PC-3 (cell line): ENCODE measurements at regions of chr1 and their contacts with region 1.

Region 1: GRCh38 chr1:235971571-235972310 is 93.1 kb downstream of the NID1 start:
- DNase-seq: peak; percentile 87
- ATAC-seq: peak; percentile 87
- H3K4me3 ChIP-seq: peak overlapping the region; percentile 15; the same call in 1 of the 2 replicates
- H3K27ac ChIP-seq: peak overlapping the region; percentile 50
- H3K4me1 ChIP-seq: peaks cover 16% of the 10 kb centered on the region
- H3K27me3 ChIP-seq: no peaks in the 10 kb centered on the region
- CTCF ChIP-seq: peak; percentile 83

Region 2: DNA sequence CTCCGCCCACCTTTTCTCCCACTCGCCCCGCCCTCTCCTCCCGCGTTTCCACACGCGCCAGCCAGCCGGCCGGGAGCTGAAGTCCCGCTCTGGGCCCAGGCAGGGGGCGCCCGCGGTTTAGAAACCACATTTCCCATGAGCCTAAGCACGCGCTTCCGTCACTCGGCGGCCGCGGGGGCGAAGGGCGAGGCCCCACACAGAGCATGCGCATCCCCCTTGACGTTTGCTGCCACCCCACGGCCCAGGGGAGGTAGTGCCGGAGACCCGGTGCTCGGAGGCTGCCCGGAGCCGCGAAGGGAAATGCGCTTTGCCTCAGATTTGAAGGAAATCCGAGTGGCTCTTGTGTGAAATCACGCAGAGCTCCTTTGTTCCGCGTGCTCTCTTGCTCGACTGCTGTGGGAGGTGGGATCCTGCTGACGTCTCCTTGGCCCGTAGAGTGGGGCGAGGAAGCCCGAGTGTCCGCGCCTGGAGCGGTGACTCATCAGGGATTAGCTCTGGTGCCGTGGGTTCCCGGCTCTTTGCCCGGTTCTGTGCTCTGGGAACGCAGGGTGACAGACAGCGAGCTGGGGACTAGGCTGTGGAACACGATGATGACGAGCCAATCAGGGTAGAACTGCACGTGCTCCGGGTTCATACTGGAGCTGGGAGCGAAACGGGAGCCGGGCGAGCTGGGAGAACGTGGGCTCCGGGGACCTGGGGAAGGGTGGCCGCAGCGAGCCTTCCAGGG is 467.1 kb before region 1 on chr1:
- CTCF ChIA-PET with region 1: no interaction called
- POLR2A ChIA-PET with region 1: no interaction called
- intact Hi-C with region 1: loop called (anchors 2 kb)
- DNase-seq: peak; percentile 95
- ATAC-seq: peak; percentile 75
- H3K4me3 ChIP-seq: peak overlapping the region; percentile 98
- H3K27ac ChIP-seq: peak overlapping the region; percentile 98
- H3K4me1 ChIP-seq: peaks cover 20% of the 10 kb centered on the region
- H3K27me3 ChIP-seq: no peaks in the 10 kb centered on the region
- CTCF ChIP-seq: peak; percentile 64

Region 3: DNA sequence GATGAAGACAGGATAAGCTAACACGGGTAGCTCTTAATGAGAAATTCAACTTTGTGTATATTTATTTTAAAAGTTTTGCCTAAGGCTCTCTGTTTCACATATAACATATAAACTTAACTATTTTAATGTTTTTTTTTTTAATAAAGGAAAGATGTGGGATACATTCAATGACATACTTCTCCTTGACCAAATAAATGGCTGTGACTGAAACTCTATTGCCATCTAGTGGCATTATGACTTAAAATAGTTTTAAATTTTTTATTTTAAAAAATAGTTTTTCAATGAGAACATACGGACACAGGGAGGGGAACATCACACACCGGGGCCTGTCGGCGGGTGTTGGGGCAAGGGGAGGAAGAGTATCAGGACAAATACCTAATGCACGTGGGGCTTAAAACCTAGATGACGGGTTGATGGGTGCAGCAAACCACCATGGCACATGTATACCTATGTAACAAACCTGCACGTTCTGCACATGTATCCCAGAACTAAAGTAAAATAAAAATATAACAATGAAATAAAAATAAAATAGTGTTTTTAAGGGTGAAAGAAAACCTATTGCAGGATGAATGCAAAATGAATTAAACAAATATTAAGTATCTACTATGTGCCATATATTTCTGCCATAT is 188.5 kb before region 1 on chr1:
- CTCF ChIA-PET with region 1: interaction called, 3 read pairs
- POLR2A ChIA-PET with region 1: no interaction called
- intact Hi-C with region 1: loop called (anchors 2 kb)
- DNase-seq: peak; percentile 66
- ATAC-seq: peak; percentile 22; the same call in 1 of the 2 replicates
- H3K4me3 ChIP-seq: no peak overlapping the region
- H3K27ac ChIP-seq: no peak overlapping the region
- H3K4me1 ChIP-seq: peaks cover 5% of the 10 kb centered on the region
- H3K27me3 ChIP-seq: no peaks in the 10 kb centered on the region
- CTCF ChIP-seq: no peak; the same call in 1 of the 2 replicates

Region 4: DNA sequence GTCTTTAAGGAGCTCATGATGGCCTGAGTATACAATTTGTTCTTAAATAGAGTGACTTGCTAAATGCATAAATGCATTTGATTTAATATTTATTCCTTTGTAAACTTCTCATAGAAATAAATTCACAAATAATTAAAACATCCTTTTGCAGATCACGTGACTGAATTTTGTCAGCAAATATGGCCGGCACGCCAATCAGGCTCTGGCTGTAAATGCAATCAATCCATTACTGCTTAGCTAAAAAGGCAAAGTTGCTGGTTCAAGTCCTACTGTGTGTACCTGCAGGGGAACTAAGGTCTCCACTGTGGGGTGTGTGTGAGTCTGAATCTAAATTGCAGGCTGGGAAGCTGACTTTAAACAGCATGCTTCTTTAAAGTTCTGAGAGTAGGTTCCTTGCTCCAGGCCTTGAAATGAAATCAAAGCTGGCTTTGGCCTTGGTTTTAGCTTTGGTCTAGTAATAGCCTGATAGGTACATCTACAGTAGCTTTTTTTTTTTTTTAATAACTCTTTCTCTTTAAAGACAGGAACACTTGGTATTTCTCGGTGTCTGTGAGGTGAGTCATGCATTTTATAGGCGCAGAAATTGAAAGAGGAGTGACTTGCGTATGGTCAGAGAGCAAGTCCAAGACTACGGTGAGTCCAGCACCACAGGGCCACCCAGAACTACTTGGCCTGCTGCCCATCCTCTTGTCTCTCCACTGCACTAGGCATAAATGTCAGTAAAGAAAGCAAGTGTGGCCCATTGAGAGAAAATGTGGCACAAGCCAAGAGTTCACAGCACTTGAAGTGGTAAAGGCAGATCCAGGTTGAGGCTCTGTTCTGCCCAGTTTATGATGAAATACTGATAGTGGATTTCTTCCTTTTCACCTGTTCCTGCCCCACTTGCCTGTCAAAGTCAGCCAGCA is 68.9 kb before region 1 on chr1:
- CTCF ChIA-PET with region 1: interaction called, 10 read pairs
- POLR2A ChIA-PET with region 1: no interaction called
- intact Hi-C with region 1: no loop called
- DNase-seq: peak; percentile 90
- ATAC-seq: peak; percentile 96
- H3K4me3 ChIP-seq: no peak overlapping the region
- H3K27ac ChIP-seq: peak overlapping the region; percentile 73
- H3K4me1 ChIP-seq: peaks cover 14% of the 10 kb centered on the region
- H3K27me3 ChIP-seq: no peaks in the 10 kb centered on the region
- CTCF ChIP-seq: no peak

Region 5: DNA sequence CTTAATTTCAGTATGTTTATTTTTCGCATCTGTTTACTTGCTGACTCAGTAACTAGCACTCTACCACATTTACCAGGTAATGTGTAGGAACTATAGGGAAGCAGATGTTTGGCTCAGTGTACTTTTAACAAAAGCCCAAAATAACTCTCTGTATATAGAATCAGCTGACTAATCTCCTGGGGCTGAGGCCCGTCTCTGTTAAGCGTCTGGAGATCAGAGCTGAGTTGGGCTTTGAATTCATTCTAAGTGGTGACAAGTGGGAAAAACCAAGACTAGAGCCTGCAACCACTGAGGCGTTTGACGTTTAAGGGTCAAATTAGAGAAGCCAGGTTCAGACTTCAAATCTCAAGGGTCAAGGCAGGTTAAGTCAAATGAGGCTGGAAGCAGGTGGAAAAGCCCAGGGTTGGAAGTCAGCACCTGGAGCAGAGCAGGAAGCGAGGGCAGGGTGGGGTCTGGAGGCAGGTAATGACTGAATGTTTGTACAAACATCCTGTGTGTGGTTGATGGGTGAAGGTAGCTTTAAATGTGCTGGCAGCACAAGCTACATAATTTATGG is 48.2 kb before region 1 on chr1:
- CTCF ChIA-PET with region 1: interaction called, 3 read pairs
- POLR2A ChIA-PET with region 1: no interaction called
- intact Hi-C with region 1: loop called (anchors 1 kb)
- DNase-seq: peak; percentile 69
- ATAC-seq: peak; percentile 78
- H3K4me3 ChIP-seq: peak overlapping the region; percentile 31
- H3K27ac ChIP-seq: peak overlapping the region; percentile 96
- H3K4me1 ChIP-seq: peaks cover 60% of the 10 kb centered on the region
- H3K27me3 ChIP-seq: no peaks in the 10 kb centered on the region
- CTCF ChIP-seq: no peak

Region 6: GRCh38 chr1:236457775-236458174 is 486.0 kb after region 1 on chr1:
- CTCF ChIA-PET with region 1: no interaction called
- POLR2A ChIA-PET with region 1: no interaction called
- intact Hi-C with region 1: no loop called
- DNase-seq: no peak
- ATAC-seq: no peak
- H3K4me3 ChIP-seq: no peak overlapping the region
- H3K27ac ChIP-seq: no peak overlapping the region
- H3K4me1 ChIP-seq: no peaks in the 10 kb centered on the region
- H3K27me3 ChIP-seq: peaks cover 7% of the 10 kb centered on the region
- CTCF ChIP-seq: no peak